ENCODE measurements at regions of chr7 and their contacts with region 1.

Region 1: GRCh38 chr7:135672560-135673359 is 10.4 kb downstream of the STMP1 start:
- DNase-seq: no peak
- ATAC-seq: peak; percentile 78 to 82
- H3K4me3 ChIP-seq: no peak overlapping the region
- H3K27ac ChIP-seq: no peak overlapping the region
- H3K4me1 ChIP-seq: peaks cover 4% of the 10 kb centered on the region
- H3K27me3 ChIP-seq: no peaks in the 10 kb centered on the region

Region 2: DNA sequence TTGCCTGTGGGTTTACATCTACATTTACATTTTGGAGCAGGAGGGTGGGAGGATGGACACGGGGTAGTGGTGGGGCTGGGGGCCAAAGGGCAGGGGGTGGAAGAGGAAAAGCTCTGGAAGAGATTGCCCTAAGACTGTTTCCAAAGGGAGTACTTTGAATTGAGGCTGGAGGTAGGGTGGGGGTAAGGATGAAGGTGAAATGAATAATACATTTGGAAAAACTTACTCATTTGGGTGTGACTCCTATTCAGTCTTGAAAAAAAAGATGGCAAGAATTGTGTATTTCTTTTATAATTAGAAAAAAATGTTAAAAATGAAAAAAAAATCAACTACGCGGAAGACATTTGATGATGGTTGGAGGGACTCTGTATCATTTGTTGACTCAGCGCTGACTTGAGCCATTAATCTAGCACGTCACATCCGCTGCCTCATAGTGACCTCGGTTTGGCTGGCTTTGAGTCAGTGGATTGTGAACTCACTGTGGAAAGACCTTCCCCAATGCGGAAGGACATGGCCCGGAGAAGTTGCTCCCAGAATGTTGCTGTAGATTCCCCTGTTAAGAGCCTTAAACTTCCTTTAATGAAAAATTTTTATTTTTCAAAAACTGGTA is 73.0 kb after region 1 on chr7:
- intact Hi-C with region 1: loop called in 1 of 4 experiments (anchors 10 kb)
- DNase-seq: peak in 2 of 3 donors; percentile 62 to 76
- ATAC-seq: peak; percentile 61 to 83
- H3K4me3 ChIP-seq: no peak overlapping the region
- H3K27ac ChIP-seq: no peak overlapping the region
- H3K4me1 ChIP-seq: no peaks in the 10 kb centered on the region
- H3K27me3 ChIP-seq: no peaks in the 10 kb centered on the region

Region 3: DNA sequence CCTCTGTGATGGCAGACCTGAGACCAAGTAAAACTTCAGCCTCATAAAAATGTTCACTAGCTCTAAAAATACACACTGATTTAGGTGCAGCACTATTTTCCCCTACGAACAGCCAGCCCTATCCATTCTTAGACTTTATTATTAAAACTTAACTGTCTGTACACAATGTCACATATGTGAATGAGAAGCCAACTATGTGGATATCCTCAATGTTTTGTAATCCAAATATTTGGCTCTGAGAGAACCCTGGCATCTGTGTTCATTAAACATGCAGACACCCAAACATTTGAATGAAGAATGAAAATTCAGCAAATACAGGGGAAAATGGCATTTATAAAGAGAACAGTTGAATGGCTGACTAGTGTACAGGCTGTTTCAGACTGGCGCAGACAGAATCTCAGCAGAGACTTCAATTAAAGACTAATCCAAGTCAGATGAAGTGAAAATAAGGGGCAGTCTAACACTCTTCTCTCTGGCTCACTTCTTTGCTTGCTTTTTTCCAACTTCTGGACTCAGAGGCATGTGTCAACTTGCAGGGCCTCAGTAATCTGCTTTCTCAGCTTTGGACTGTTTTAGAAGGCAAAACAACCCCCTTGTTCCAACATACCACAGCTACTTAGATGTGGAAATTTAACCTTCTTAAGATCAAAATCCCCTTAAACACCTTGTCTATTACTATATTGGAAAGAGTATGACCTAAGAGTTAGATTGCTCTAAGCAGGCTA is 123.2 kb after region 1 on chr7:
- intact Hi-C with region 1: loop called in 3 of 4 experiments (anchors 2 to 10 kb)
- DNase-seq: no peak
- ATAC-seq: peak in 1 of 2 donors; percentile 28
- H3K4me3 ChIP-seq: no peak overlapping the region
- H3K27ac ChIP-seq: no peak overlapping the region
- H3K4me1 ChIP-seq: no peaks in the 10 kb centered on the region
- H3K27me3 ChIP-seq: no peaks in the 10 kb centered on the region

Region 4: GRCh38 chr7:136009488-136010079 is 336.8 kb after region 1 on chr7:
- intact Hi-C with region 1: loop called in 2 of 4 experiments (anchors 10 kb)
- DNase-seq: no peak
- ATAC-seq: no peak
- H3K4me3 ChIP-seq: no peak overlapping the region
- H3K27ac ChIP-seq: no peak overlapping the region
- H3K4me1 ChIP-seq: no peaks in the 10 kb centered on the region
- H3K27me3 ChIP-seq: no peaks in the 10 kb centered on the region

Measured in right cardiac atrium (tissue), 5 donors.